ENCODE measurements at regions of chr15 and their contacts with region 1.

Region 1: DNA sequence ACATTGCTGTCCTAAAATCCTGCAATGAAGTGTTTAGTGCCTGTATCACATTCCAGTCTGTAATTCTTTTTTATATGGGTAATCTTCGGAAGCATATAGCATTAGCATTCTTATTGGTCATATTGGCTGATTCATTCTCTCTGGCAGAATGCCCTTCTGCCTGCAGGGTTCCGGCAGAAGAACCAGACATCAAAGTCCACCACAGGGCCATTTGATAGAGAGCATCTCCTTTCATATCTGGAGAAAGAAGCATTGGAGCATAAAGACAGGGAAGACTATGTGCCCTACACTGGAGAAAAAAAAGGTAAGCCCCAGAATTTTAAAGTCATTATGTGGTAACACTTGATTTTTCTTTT is 39.6 kb downstream of the TMOD3 start:
- DNase-seq: peak; percentile 73
- H3K4me3 Mint-ChIP-seq: no peak overlapping the region
- H3K27ac Mint-ChIP-seq: peak overlapping the region; percentile 19
- H3K4me1 Mint-ChIP-seq: peaks cover 53% of the 10 kb centered on the region
- H3K27me3 Mint-ChIP-seq: no peaks in the 10 kb centered on the region
- CTCF ChIP-seq: no peak

Region 2: GRCh38 chr15:51348688-51349087 is 520.4 kb before region 1 on chr15:
- CTCF ChIA-PET with region 1: no interaction called
- POLR2A ChIA-PET with region 1: no interaction called
- intact Hi-C with region 1: no loop called
- DNase-seq: no peak
- H3K4me3 Mint-ChIP-seq: no peak overlapping the region
- H3K27ac Mint-ChIP-seq: no peak overlapping the region
- H3K4me1 Mint-ChIP-seq: no peaks in the 10 kb centered on the region
- H3K27me3 Mint-ChIP-seq: no peaks in the 10 kb centered on the region
- CTCF ChIP-seq: no peak

Region 3: DNA sequence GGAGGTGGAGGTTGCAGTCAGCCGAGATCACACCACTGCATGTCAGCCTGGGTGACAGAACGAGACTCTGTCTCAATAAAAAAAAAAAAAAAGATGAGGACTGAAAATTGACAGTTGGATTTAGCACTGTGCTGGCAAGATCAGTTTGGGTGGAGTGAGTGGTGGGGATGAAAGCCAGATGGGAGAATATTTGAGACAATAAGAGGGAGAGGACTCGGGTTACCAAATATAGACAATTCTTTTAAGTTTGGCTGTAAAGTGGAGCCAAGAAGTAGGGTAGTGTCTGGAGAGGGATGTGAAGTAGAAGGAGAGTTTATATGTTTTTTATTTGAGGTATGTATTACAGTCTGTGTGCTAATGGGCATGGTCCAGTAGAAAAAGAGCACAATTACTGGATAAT is 19.2 kb before region 1 on chr15:
- CTCF ChIA-PET with region 1: interaction called, 4 read pairs
- POLR2A ChIA-PET with region 1: interaction called, 27 read pairs
- intact Hi-C with region 1: no loop called
- DNase-seq: no peak
- H3K4me3 Mint-ChIP-seq: no peak overlapping the region
- H3K27ac Mint-ChIP-seq: peak overlapping the region; percentile 75
- H3K4me1 Mint-ChIP-seq: peaks cover 62% of the 10 kb centered on the region
- H3K27me3 Mint-ChIP-seq: no peaks in the 10 kb centered on the region
- CTCF ChIP-seq: no peak

Measured in MCF 10A (cell line).